ENCODE measurements at regions of chr2 and their contacts with region 1.

Region 1: DNA sequence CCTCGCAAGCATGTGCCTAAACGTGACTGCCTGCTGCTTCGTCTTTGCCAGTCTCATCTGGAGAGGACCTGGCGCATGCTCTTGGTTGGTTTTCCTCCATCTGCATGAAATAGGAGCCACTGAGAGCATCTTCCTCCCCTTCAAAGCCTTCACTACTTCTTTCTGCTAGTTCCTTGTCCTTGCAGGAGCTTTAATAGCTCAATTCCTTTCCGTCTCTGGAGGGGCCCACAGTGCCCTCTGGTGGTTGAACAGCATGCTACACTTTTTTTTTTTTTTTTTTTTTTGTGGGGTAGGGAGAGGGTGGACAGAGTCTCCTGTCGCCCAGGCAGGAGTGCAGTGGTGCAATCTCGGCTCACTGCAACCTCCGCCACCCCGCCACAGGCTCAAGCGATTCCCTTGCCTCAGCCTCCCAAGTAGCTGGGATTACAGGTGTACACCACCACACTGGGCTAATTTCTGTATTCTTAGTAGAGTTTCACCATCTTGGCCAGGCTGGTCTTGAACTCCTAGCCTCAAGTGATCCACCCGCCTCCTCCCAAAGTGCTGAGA is 59.6 kb downstream of the SP110 start:
- DNase-seq: peak; percentile 72
- ATAC-seq: peak; percentile 78
- H3K4me3 ChIP-seq: no peak overlapping the region
- H3K27ac ChIP-seq: no peak overlapping the region
- H3K4me1 ChIP-seq: no peaks in the 10 kb centered on the region
- H3K27me3 ChIP-seq: no peaks in the 10 kb centered on the region
- CTCF ChIP-seq: peak; percentile 85

Region 2: DNA sequence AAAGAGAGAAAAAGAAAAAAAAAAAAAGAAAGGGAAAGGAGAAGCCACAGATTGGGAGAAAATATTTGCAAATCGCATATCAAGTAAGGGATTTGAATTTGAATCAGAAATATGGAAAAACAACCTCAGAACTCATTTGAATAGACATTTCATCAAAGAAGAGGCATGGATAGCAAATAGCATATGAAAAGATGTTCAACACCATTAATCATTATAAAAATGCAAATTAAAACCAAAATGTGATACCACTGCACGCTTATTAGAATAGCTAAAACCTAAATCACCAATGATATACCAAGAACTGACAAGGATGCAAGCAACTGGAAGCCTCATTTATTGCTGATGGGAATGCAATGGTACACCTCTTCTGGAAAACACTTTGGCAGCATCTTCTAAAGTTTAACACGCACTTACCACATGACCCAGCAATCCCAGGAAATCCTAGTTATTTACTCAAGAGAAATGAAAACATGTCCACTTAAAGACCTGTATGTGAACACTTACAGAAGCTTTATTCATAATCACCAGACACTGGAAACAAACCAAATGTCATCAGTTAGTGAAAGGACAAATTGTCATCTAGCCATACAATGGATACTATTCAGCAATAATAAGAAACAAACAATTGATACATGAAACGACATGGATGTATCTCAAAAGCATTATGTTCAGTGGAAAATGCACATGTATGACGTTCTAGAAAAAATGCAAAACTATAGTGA is 456.1 kb before region 1 on chr2:
- CTCF ChIA-PET with region 1: interaction called, 10 read pairs
- POLR2A ChIA-PET with region 1: no interaction called
- intact Hi-C with region 1: no loop called
- DNase-seq: no peak
- ATAC-seq: no peak
- H3K4me3 ChIP-seq: no peak overlapping the region
- H3K27ac ChIP-seq: no peak overlapping the region
- H3K4me1 ChIP-seq: no peaks in the 10 kb centered on the region
- H3K27me3 ChIP-seq: peaks cover 46% of the 10 kb centered on the region; the same call in 1 of the 2 replicates
- CTCF ChIP-seq: no peak

Region 3: GRCh38 chr2:229974266-229974665 is 185.9 kb before region 1 on chr2:
- CTCF ChIA-PET with region 1: no interaction called
- POLR2A ChIA-PET with region 1: interaction called, 25 read pairs
- intact Hi-C with region 1: no loop called
- DNase-seq: no peak
- ATAC-seq: no peak
- H3K4me3 ChIP-seq: no peak overlapping the region
- H3K27ac ChIP-seq: no peak overlapping the region
- H3K4me1 ChIP-seq: no peaks in the 10 kb centered on the region
- H3K27me3 ChIP-seq: no peaks in the 10 kb centered on the region
- CTCF ChIP-seq: 0 out of 2 replicates have a peak, but pooled peaks have one; percentile 12

Region 4: GRCh38 chr2:230018153-230018552 is 142.0 kb before region 1 on chr2:
- CTCF ChIA-PET with region 1: interaction called, 13 read pairs
- POLR2A ChIA-PET with region 1: no interaction called
- intact Hi-C with region 1: no loop called
- DNase-seq: peak; percentile 73
- ATAC-seq: peak; percentile 92
- H3K4me3 ChIP-seq: no peak overlapping the region
- H3K27ac ChIP-seq: no peak overlapping the region
- H3K4me1 ChIP-seq: peaks cover 3% of the 10 kb centered on the region; the same call in 1 of the 2 replicates
- H3K27me3 ChIP-seq: no peaks in the 10 kb centered on the region
- CTCF ChIP-seq: no peak

Region 5: GRCh38 chr2:230053753-230054478 is 106.3 kb before region 1 on chr2:
- CTCF ChIA-PET with region 1: interaction called, 18 read pairs
- POLR2A ChIA-PET with region 1: no interaction called
- intact Hi-C with region 1: no loop called
- DNase-seq: peak; percentile 85
- ATAC-seq: peak; percentile 88
- H3K4me3 ChIP-seq: no peak overlapping the region
- H3K27ac ChIP-seq: peak overlapping the region; percentile 79
- H3K4me1 ChIP-seq: peaks cover 27% of the 10 kb centered on the region
- H3K27me3 ChIP-seq: no peaks in the 10 kb centered on the region
- CTCF ChIP-seq: no peak

Region 6: GRCh38 chr2:230097841-230098240 is 62.3 kb before region 1 on chr2:
- CTCF ChIA-PET with region 1: interaction called, 13 read pairs
- POLR2A ChIA-PET with region 1: no interaction called
- intact Hi-C with region 1: no loop called
- DNase-seq: peak; percentile 84
- ATAC-seq: peak; percentile 98
- H3K4me3 ChIP-seq: no peak overlapping the region
- H3K27ac ChIP-seq: peak overlapping the region; percentile 91
- H3K4me1 ChIP-seq: peaks cover 21% of the 10 kb centered on the region
- H3K27me3 ChIP-seq: no peaks in the 10 kb centered on the region
- CTCF ChIP-seq: no peak

Region 7: DNA sequence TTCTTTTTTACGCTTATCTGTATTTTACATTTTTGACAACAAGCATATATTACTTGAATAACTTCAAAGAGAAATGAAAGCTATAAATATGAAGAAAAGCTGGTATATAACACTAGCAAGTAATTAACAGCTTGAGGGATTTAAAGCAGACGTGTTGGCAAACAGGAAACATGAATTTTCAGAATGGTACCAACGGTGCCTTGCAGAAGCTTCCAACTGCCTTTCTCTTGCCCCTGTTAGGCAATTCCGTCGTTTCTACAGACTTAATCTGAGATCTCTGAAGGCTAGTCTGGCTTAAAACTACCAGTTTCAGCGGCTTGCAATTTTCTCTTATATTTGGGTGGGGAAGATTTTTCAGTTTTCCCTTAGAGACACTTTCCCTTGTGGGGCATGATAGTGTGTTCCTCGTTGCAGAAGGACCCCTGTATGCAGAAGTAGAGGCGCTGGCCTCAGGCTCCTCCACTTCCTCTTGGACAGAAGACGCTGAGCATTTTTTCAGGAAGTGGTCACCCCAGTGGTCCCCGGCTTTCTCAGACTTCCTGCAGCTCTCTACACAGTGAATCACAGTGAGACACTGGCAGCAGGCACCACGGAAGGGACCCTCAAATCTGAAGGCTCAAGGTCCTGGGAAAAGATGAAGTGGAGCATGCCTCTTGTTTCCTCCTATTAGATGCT is 35.3 kb before region 1 on chr2:
- CTCF ChIA-PET with region 1: no interaction called
- POLR2A ChIA-PET with region 1: no interaction called
- intact Hi-C with region 1: no loop called
- DNase-seq: no peak
- ATAC-seq: no peak
- H3K4me3 ChIP-seq: no peak overlapping the region
- H3K27ac ChIP-seq: no peak overlapping the region
- H3K4me1 ChIP-seq: no peaks in the 10 kb centered on the region
- H3K27me3 ChIP-seq: no peaks in the 10 kb centered on the region
- CTCF ChIP-seq: no peak

Region 8: DNA sequence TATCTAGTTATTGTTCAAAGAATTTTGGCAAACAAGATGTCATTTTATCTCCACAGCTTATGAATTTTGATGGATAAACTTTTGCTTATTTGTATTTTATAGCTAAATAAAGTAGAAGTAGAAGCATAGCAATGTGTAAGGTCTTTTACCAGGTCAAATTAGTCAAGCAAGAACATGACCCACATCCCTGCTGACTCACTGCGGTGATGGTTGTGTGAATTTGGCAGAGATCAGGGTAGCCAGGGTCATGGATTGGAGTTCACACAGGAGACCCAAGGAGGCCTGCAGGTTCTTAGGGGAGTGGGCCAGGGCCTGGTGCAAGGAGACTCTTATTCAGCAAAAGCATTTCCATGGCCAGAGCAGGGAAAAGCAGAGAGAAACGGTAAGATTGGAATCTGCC is 84.0 kb after region 1 on chr2:
- CTCF ChIA-PET with region 1: no interaction called
- POLR2A ChIA-PET with region 1: no interaction called
- intact Hi-C with region 1: no loop called
- DNase-seq: peak; percentile 25
- ATAC-seq: peak; percentile 45; the same call in 1 of the 2 replicates
- H3K4me3 ChIP-seq: no peak overlapping the region
- H3K27ac ChIP-seq: no peak overlapping the region
- H3K4me1 ChIP-seq: no peaks in the 10 kb centered on the region
- H3K27me3 ChIP-seq: 0 out of 2 replicates have a peak, but pooled peaks cover 3% of the 10 kb centered on the region
- CTCF ChIP-seq: no peak

Region 9: GRCh38 chr2:230335451-230335863 is 175.3 kb after region 1 on chr2:
- CTCF ChIA-PET with region 1: no interaction called
- POLR2A ChIA-PET with region 1: no interaction called
- intact Hi-C with region 1: no loop called
- DNase-seq: peak; percentile 12
- ATAC-seq: no peak
- H3K4me3 ChIP-seq: no peak overlapping the region
- H3K27ac ChIP-seq: no peak overlapping the region
- H3K4me1 ChIP-seq: no peaks in the 10 kb centered on the region
- H3K27me3 ChIP-seq: no peaks in the 10 kb centered on the region
- CTCF ChIP-seq: no peak

Measured in PC-3 (cell line).